Psoas muscle (tissue), 8 donors: ENCODE measurements at regions of chr13 and their contacts with region 1.

Region 1: GRCh38 chr13:96011291-96011872 is 41.8 kb downstream of the UGGT2 start:
- DNase-seq: no peak
- ATAC-seq: no peak
- H3K4me3 ChIP-seq: no peak overlapping the region
- H3K27ac ChIP-seq: no peak overlapping the region
- H3K4me1 ChIP-seq: no peaks in the 10 kb centered on the region
- H3K27me3 ChIP-seq: no peaks in the 10 kb centered on the region
- CTCF ChIP-seq: no peak

Region 2: GRCh38 chr13:96075953-96076543 is 64.7 kb after region 1 on chr13:
- intact Hi-C with region 1: loop called in 1 of 2 experiments (anchors 2 kb)
- DNase-seq: no peak
- ATAC-seq: no peak
- H3K4me3 ChIP-seq: no peak overlapping the region
- H3K27ac ChIP-seq: no peak overlapping the region
- H3K4me1 ChIP-seq: no peaks in the 10 kb centered on the region
- H3K27me3 ChIP-seq: peaks cover 0 to 4% (median 0%) of the 10 kb centered on the region in 3 donors
- CTCF ChIP-seq: peak; percentile 34

Region 3: GRCh38 chr13:96238861-96239626 is 227.7 kb after region 1 on chr13:
- intact Hi-C with region 1: loop called in 1 of 2 experiments (anchors 10 kb)
- DNase-seq: no peak
- ATAC-seq: no peak
- H3K4me3 ChIP-seq: no peak overlapping the region
- H3K27ac ChIP-seq: no peak overlapping the region
- H3K4me1 ChIP-seq: no peaks in the 10 kb centered on the region
- H3K27me3 ChIP-seq: no peaks in the 10 kb centered on the region
- CTCF ChIP-seq: no peak